Calu3 (cell line): ENCODE measurements at regions of chr6 and their contacts with region 1.

Region 1: DNA sequence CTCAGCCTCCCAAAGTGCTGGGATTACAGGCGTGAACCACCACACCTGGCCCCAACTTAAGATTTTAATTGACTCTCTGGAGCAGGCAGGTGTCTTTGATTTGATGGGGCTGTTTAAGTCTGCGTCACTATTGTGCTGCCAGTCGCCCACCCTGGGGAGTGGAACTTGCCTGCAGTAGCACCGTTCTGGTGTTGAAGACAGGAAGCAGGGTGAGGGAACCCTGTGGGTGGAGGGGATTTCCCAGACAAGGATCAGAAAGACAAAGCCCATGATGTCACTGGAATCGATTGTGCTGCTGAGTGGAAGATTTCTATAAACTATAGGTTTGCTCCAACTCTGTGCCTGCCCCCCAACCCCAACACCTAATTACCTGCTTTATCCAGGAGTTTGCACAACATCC is 11.0 kb downstream of the ALDH8A1 start:
- DNase-seq: no peak
- H3K4me3 Mint-ChIP-seq: no peak overlapping the region
- H3K27ac Mint-ChIP-seq: no peak overlapping the region
- H3K4me1 Mint-ChIP-seq: peaks cover 8% of the 10 kb centered on the region
- H3K27me3 Mint-ChIP-seq: no peaks in the 10 kb centered on the region
- CTCF ChIP-seq: no peak

Region 2: GRCh38 chr6:134123666-134124208 is 815.2 kb before region 1 on chr6:
- CTCF ChIA-PET with region 1: interaction called, 13 read pairs
- intact Hi-C with region 1: loop called (anchors 2 kb)
- DNase-seq: peak; percentile 36
- H3K4me3 Mint-ChIP-seq: no peak overlapping the region
- H3K27ac Mint-ChIP-seq: no peak overlapping the region
- H3K4me1 Mint-ChIP-seq: no peaks in the 10 kb centered on the region
- H3K27me3 Mint-ChIP-seq: no peaks in the 10 kb centered on the region
- CTCF ChIP-seq: peak; percentile 56

Region 3: DNA sequence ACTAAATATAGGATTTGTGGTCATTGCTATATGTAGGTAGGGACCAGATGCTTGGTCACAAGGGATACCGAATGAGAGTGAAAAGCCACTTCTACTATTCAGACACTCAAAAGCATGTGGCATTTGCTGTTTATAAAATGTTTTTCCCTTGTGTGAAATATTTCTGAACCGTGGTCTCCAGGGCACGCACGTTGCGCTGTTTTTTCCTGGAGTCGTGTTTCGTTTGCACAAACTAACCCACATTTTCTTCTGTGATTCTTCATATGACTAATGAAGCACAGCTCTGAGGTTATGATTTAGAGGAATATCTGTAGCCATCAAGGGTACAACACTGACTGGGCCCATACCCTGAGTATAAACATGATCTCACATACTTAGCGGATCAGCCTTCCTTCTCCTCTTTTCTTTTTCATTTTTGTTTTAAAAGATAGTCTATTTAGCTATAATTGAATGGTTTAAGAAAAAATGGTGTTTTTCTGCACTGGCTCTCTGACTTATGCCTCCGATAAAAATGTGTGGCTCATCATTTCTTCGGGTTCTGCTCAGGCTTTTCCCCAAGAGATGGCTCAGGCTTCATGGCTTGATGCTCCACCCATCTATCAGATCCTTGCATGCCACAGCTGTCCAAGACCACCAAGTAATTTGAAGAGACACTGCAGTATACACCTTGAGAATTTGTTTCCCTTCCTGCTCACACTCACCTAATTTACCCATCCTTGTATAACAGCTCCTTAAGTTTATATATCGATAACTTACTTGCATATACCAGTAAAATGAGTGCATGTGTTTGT is 175.7 kb after region 1 on chr6:
- CTCF ChIA-PET with region 1: no interaction called
- intact Hi-C with region 1: no loop called
- DNase-seq: no peak
- H3K4me3 Mint-ChIP-seq: no peak overlapping the region
- H3K27ac Mint-ChIP-seq: no peak overlapping the region
- H3K4me1 Mint-ChIP-seq: no peaks in the 10 kb centered on the region
- H3K27me3 Mint-ChIP-seq: peaks cover 14% of the 10 kb centered on the region
- CTCF ChIP-seq: no peak